B cell (primary cell): ENCODE measurements at regions of chr1 and their contacts with region 1.

Region 1: DNA sequence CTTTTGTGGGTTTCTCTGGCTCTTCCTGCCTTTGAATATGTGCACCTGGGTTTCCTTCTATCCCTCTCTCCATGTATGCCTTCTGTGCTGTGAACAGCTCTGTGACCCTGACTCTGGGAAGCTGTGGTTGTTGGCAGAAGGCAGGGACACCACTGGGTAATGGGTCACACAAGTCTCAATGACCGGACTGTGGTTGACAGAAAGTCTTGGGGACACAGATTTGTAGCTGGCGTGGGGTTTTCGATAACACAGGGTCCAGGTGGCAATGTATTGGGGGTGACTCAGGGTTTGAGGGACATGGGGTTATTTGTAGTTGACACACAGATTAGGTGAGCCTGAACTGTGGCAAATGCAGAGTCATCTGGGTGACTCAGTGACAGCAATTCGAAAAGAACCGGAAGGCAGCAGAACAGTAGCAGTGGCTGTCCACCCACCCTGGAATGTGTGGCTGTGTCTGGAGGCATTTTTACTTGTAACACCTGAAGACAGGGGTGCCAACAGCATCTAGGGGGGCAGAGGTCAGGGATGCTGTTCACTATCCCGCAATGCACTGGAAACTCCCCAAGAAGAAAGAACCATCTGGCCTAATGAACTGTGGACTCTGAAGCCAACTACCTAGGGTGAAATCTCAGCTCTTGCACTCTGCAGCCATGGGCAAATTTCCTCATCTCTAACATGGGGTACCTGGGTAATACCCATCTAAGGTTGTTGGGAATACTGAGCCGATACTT is 13.0 kb upstream of the SLC6A9 start:
- DNase-seq: no peak
- ATAC-seq: no peak
- H3K4me3 ChIP-seq: no peak overlapping the region
- H3K4me3 Mint-ChIP-seq: no peak overlapping the region
- H3K27ac ChIP-seq: no peak overlapping the region
- H3K27ac Mint-ChIP-seq: no peak overlapping the region
- H3K4me1 ChIP-seq: peaks cover 0 to 3% of the 10 kb centered on the region in 2 donors
- H3K4me1 Mint-ChIP-seq: peaks cover 6% of the 10 kb centered on the region
- H3K27me3 ChIP-seq: peaks cover 0 to 11% (median 0%) of the 10 kb centered on the region in 4 experiments
- H3K27me3 Mint-ChIP-seq: peaks cover 22% of the 10 kb centered on the region
- CTCF ChIP-seq: no peak

Region 2: GRCh38 chr1:43554444-43554992 is 489.7 kb before region 1 on chr1:
- CTCF ChIA-PET with region 1: no interaction called
- POLR2A ChIA-PET with region 1: no interaction called
- intact Hi-C with region 1: no loop called
- DNase-seq: no peak
- ATAC-seq: no peak
- H3K4me3 ChIP-seq: no peak overlapping the region
- H3K4me3 Mint-ChIP-seq: no peak overlapping the region
- H3K27ac ChIP-seq: no peak overlapping the region
- H3K27ac Mint-ChIP-seq: no peak overlapping the region
- H3K4me1 ChIP-seq: peaks cover 0 to 3% of the 10 kb centered on the region in 2 donors
- H3K4me1 Mint-ChIP-seq: peaks cover 6% of the 10 kb centered on the region
- H3K27me3 ChIP-seq: peaks cover 0 to 13% (median 1%) of the 10 kb centered on the region in 4 experiments
- H3K27me3 Mint-ChIP-seq: peaks cover 15% of the 10 kb centered on the region
- CTCF ChIP-seq: peak; percentile 10

Region 3: DNA sequence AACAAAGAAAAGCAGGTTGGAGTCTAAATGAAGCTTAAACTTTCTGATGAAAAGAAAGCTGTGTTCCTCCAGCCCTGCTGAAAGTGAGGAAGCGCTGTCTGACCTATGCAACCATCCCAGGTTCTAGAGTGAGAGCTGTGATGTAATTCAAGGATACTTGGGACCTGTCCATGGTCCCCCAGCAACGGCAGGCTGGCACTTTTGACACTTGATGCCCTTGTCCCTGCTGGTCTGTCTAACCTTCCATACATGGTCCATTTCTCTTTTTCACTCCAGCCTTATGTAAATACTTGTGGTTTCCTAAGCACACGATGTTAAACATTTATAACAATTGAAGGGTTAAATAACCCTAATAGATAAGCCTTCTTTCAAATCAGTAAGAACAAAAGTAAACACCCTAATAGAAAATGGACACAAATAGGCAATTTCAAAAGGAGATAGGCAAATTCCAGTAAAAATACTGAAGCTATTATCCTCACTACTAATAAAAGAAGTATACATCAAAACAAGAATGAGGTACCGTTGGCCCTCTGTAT is 412.0 kb before region 1 on chr1:
- CTCF ChIA-PET with region 1: no interaction called
- POLR2A ChIA-PET with region 1: no interaction called
- intact Hi-C with region 1: no loop called
- DNase-seq: no peak
- ATAC-seq: no peak
- H3K4me3 ChIP-seq: no peak overlapping the region
- H3K4me3 Mint-ChIP-seq: no peak overlapping the region
- H3K27ac ChIP-seq: no peak overlapping the region
- H3K27ac Mint-ChIP-seq: no peak overlapping the region
- H3K4me1 ChIP-seq: no peaks in the 10 kb centered on the region
- H3K4me1 Mint-ChIP-seq: no peaks in the 10 kb centered on the region
- H3K27me3 ChIP-seq: no peaks in the 10 kb centered on the region
- H3K27me3 Mint-ChIP-seq: peaks cover 14% of the 10 kb centered on the region
- CTCF ChIP-seq: no peak

Region 4: GRCh38 chr1:44057293-44057692 is 13.1 kb after region 1 on chr1:
- CTCF ChIA-PET with region 1: interaction called, 10 read pairs
- POLR2A ChIA-PET with region 1: no interaction called
- intact Hi-C with region 1: no loop called
- DNase-seq: no peak
- ATAC-seq: no peak
- H3K4me3 ChIP-seq: no peak overlapping the region
- H3K4me3 Mint-ChIP-seq: no peak overlapping the region
- H3K27ac ChIP-seq: no peak overlapping the region
- H3K27ac Mint-ChIP-seq: no peak overlapping the region
- H3K4me1 ChIP-seq: no peaks in the 10 kb centered on the region
- H3K4me1 Mint-ChIP-seq: no peaks in the 10 kb centered on the region
- H3K27me3 ChIP-seq: no peaks in the 10 kb centered on the region
- H3K27me3 Mint-ChIP-seq: peaks cover 5% of the 10 kb centered on the region
- CTCF ChIP-seq: no peak